ENCODE measurements at regions of chr16 and their contacts with region 1.

Region 1: DNA sequence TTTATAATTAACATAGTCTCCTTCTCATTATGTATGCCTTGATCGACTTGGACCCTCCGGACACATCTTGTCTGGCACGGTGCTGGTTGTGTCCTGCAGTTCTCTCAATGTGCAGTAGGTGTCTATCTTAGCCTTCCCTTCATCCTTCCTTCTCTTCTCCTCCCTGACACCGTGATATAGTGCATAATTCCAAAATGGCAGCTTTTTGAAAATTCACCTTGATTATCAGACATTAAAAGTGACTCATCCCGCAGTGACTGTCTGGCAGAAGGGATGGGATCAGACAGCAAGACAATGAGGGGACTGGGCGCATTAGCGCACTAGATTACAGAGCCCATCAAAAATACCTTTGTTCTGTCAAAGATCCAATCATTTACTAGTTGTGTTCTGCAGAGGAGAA is 70.0 kb upstream of the PMFBP1 start:
- DNase-seq: peak; percentile 3
- H3K4me3 ChIP-seq: no peak overlapping the region
- H3K27me3 ChIP-seq: no peaks in the 10 kb centered on the region
- CTCF ChIP-seq: peak; percentile 94

Region 2: DNA sequence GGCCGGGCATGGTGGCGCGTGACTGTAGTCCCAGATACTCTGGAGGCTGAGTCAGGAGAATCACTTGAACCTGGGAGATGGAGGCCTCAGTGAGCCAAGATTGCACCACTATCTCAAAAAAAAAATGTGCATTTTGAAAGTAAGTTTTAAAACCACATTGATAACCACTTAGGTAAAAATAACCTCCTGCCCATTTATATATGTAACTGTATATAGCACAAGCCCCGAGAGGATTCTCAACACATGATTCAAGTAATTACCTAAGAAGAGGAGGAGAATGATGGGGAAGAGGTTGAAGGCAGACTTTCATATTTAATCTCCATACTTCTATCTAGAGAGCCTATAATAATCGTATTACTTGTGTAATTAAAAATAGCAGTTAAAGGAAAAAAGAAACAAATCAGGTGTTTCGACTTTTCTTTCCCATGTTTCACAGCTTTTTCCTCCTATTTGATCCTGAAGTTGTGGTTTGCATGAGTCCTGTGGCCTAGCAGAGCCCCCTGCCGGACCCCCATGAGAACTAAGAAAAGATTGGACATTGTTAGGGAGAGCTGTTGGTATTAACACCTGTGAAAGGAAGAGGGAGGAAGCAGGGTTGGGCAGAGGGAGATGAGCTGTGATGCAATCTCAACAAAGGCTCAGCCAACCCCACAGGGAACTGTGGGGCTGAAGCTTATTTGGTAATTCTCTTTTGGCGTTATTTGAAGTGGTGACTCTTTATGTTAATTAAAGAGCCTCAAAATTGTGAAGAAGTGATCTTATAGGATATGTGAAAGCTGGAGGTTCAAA is 92.1 kb before region 1 on chr16:
- CTCF ChIA-PET with region 1: no interaction called
- POLR2A ChIA-PET with region 1: no interaction called
- DNase-seq: no peak
- H3K4me3 ChIP-seq: no peak overlapping the region
- H3K27me3 ChIP-seq: no peaks in the 10 kb centered on the region
- CTCF ChIP-seq: no peak

Region 3: DNA sequence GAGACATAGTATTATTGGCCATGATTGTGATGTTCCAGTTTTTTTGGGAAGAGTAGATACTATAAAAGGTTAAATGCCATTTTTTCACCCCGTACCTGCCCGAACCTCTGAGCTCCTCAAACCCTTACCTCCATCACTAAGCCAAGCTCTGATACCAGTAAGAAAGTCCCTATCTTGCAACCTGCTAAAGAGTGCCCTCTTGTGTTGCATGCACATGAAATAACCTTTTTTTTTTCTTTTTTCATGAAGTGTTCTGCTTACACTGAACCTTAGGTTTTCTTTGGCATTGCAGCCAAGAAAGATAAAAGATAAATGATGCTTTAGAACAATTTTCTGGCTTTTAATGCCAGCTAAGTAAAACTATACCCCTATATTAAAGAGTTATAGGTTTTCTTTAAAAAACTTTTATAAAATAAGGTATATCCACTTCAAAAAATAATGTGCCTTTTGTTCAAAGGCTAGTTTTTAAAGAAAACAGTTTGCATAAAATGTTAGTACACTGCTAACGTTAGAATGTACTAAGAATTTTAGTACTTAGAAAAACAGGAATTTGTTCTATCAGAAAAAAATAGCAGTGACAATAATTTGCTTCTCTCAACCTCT is 225.3 kb after region 1 on chr16:
- CTCF ChIA-PET with region 1: interaction called, 96 read pairs
- POLR2A ChIA-PET with region 1: no interaction called
- DNase-seq: no peak
- H3K4me3 ChIP-seq: no peak overlapping the region
- H3K27me3 ChIP-seq: no peaks in the 10 kb centered on the region
- CTCF ChIP-seq: peak; percentile 77

Measured in BJ (cell line).